ENCODE measurements at regions of chr2 and their contacts with region 1.

Region 1: GRCh38 chr2:8693155-8693821 is 11.4 kb downstream of the ID2 start:
- DNase-seq: peak; percentile 47
- H3K4me3 ChIP-seq: peak overlapping the region; percentile 5
- H3K27ac ChIP-seq: no peak overlapping the region
- H3K4me1 ChIP-seq: no peaks in the 10 kb centered on the region
- CTCF ChIP-seq: peak; percentile 84

Region 2: GRCh38 chr2:8761529-8762164 is 68.4 kb after region 1 on chr2:
- CTCF ChIA-PET with region 1: no interaction called
- POLR2A ChIA-PET with region 1: no interaction called
- intact Hi-C with region 1: loop called (anchors 5 kb)
- DNase-seq: peak; percentile 45
- H3K4me3 ChIP-seq: no peak overlapping the region
- H3K27ac ChIP-seq: no peak overlapping the region
- H3K4me1 ChIP-seq: no peaks in the 10 kb centered on the region
- CTCF ChIP-seq: peak; percentile 84